ENCODE measurements at regions of chr2 and their contacts with region 1.

Region 1: GRCh38 chr2:26577434-26578112 is 63.6 kb downstream of the CIB4 start:
- DNase-seq: peak; percentile 67
- H3K4me3 Mint-ChIP-seq: no peak overlapping the region
- H3K27ac Mint-ChIP-seq: no peak overlapping the region
- H3K4me1 Mint-ChIP-seq: no peaks in the 10 kb centered on the region
- H3K27me3 Mint-ChIP-seq: peaks cover 59% of the 10 kb centered on the region
- CTCF ChIP-seq: peak; percentile 98

Region 2: GRCh38 chr2:25056098-25056821 is 1521.3 kb before region 1 on chr2:
- CTCF ChIA-PET with region 1: no interaction called
- POLR2A ChIA-PET with region 1: no interaction called
- intact Hi-C with region 1: no loop called
- DNase-seq: no peak
- H3K4me3 Mint-ChIP-seq: no peak overlapping the region
- H3K27ac Mint-ChIP-seq: no peak overlapping the region
- H3K4me1 Mint-ChIP-seq: no peaks in the 10 kb centered on the region
- H3K27me3 Mint-ChIP-seq: peaks cover 42% of the 10 kb centered on the region
- CTCF ChIP-seq: no peak

Region 3: GRCh38 chr2:25951071-25951547 is 626.5 kb before region 1 on chr2:
- CTCF ChIA-PET with region 1: interaction called, 4 read pairs
- POLR2A ChIA-PET with region 1: no interaction called
- intact Hi-C with region 1: loop called (anchors 5 kb)
- DNase-seq: peak; percentile 85
- H3K4me3 Mint-ChIP-seq: no peak overlapping the region
- H3K27ac Mint-ChIP-seq: no peak overlapping the region
- H3K4me1 Mint-ChIP-seq: no peaks in the 10 kb centered on the region
- H3K27me3 Mint-ChIP-seq: no peaks in the 10 kb centered on the region
- CTCF ChIP-seq: peak; percentile 91

Region 4: DNA sequence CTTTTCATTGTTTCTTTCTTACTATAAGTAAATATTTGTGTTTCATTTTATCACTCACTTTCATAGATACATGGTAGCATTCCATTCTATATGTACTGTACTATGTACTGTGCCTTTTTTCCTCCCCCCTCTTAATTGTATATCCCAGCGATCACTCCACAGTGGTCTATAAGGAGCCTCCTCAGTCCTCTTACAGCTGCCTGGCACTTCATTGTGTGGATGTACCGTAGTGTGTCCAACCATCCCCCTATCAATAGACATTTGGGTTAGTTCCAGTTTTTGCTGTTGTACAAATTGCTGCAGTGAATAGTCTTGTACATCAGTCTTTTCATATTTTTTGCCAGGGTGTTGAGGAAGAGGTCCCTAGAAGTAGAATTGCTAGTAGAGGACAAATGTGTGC is 197.3 kb before region 1 on chr2:
- CTCF ChIA-PET with region 1: no interaction called
- POLR2A ChIA-PET with region 1: no interaction called
- intact Hi-C with region 1: no loop called
- DNase-seq: no peak
- H3K4me3 Mint-ChIP-seq: no peak overlapping the region
- H3K27ac Mint-ChIP-seq: no peak overlapping the region
- H3K4me1 Mint-ChIP-seq: peaks cover 6% of the 10 kb centered on the region
- H3K27me3 Mint-ChIP-seq: no peaks in the 10 kb centered on the region
- CTCF ChIP-seq: no peak

Region 5: GRCh38 chr2:26521054-26521912 is 56.3 kb before region 1 on chr2:
- CTCF ChIA-PET with region 1: interaction called, 14 read pairs
- POLR2A ChIA-PET with region 1: no interaction called
- intact Hi-C with region 1: no loop called
- DNase-seq: peak; percentile 42
- H3K4me3 Mint-ChIP-seq: no peak overlapping the region
- H3K27ac Mint-ChIP-seq: no peak overlapping the region
- H3K4me1 Mint-ChIP-seq: no peaks in the 10 kb centered on the region
- H3K27me3 Mint-ChIP-seq: peaks cover 47% of the 10 kb centered on the region
- CTCF ChIP-seq: peak; percentile 36

Region 6: GRCh38 chr2:26550276-26550950 is 27.2 kb before region 1 on chr2:
- CTCF ChIA-PET with region 1: interaction called, 10 read pairs
- POLR2A ChIA-PET with region 1: interaction called, 4 read pairs
- intact Hi-C with region 1: no loop called
- DNase-seq: no peak
- H3K4me3 Mint-ChIP-seq: no peak overlapping the region
- H3K27ac Mint-ChIP-seq: no peak overlapping the region
- H3K4me1 Mint-ChIP-seq: no peaks in the 10 kb centered on the region
- H3K27me3 Mint-ChIP-seq: peaks cover 83% of the 10 kb centered on the region
- CTCF ChIP-seq: no peak

Region 7: DNA sequence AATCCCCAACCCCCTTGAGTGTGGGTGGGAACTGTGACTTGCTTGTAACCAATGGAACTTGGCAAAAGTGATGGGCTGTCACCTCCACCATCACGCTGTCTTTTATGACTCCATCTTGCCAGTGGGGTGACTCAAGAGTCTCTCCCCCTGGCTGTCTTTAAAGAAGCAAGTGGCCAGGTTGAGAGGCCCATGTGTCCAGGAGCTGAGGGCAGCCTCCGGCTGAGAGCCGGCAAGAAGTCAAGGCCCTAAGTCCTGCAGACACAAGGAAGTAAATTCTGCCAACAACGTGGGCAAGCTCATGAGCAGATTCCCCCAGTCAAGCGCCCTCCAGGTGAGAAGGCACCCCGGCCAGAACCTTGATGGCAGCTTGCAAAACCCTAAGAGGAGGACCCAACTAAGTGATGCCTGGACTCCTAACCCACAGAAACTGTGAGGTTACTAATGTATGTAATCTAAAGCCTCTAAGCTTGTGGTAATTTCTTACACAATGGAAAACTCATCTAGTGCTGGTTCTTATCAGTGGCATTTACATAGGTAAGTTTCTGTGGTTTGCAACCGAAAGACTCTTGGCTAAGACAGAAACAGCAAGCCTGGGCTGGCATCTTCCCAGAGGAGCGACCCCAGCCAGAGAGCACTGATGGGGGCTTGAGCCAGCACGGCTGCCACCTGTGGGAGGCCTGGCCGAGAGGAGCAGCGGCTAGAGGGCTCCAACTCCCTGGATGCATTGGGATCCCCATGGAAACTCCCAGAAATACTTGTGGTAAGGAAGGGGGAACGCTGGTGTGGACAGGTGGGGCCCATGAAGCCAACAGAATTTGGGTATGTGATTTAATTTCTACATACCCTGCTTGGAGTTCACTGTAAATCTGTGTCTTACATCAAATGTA is 14.3 kb after region 1 on chr2:
- CTCF ChIA-PET with region 1: interaction called, 47 read pairs
- POLR2A ChIA-PET with region 1: no interaction called
- intact Hi-C with region 1: no loop called
- DNase-seq: no peak
- H3K4me3 Mint-ChIP-seq: no peak overlapping the region
- H3K27ac Mint-ChIP-seq: no peak overlapping the region
- H3K4me1 Mint-ChIP-seq: no peaks in the 10 kb centered on the region
- H3K27me3 Mint-ChIP-seq: peaks cover 77% of the 10 kb centered on the region
- CTCF ChIP-seq: no peak

Region 8: GRCh38 chr2:26745609-26746327 is 168.2 kb after region 1 on chr2:
- CTCF ChIA-PET with region 1: interaction called, 23 read pairs
- POLR2A ChIA-PET with region 1: no interaction called
- intact Hi-C with region 1: no loop called
- DNase-seq: peak; percentile 88
- H3K4me3 Mint-ChIP-seq: no peak overlapping the region
- H3K27ac Mint-ChIP-seq: no peak overlapping the region
- H3K4me1 Mint-ChIP-seq: no peaks in the 10 kb centered on the region
- H3K27me3 Mint-ChIP-seq: no peaks in the 10 kb centered on the region
- CTCF ChIP-seq: peak; percentile 91

Measured in MCF 10A (cell line).